ENCODE measurements at regions of chr10 and their contacts with region 1.

Region 1: GRCh38 chr10:70212879-70213278 is 20.4 kb downstream of the PPA1 start:
- DNase-seq: no peak
- H3K4me3 ChIP-seq: no peak overlapping the region
- H3K27ac ChIP-seq: no peak overlapping the region
- H3K4me1 ChIP-seq: no peaks in the 10 kb centered on the region
- H3K27me3 ChIP-seq: no peaks in the 10 kb centered on the region
- CTCF ChIP-seq: no peak

Region 2: DNA sequence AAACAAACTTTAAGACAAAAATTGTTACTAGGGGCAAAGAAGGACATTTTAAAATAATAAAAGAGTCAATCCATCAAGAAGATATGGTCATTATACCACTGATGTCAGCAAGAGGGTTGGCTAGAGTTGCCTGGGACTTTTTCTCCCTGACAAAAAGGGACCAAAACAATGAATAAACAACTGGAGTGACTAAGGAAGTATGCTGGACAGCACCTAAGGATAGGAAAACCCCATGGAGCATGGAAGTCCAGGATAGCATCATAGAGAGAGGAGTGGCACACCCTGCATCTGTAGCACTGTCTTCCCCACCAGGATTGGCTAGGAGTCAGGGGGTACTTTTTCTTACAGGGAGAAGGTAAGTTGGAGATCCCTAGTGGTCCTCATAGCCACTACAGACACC is 233.7 kb before region 1 on chr10:
- intact Hi-C with region 1: no loop called
- DNase-seq: no peak
- H3K4me3 ChIP-seq: no peak overlapping the region
- H3K27ac ChIP-seq: no peak overlapping the region
- H3K4me1 ChIP-seq: no peaks in the 10 kb centered on the region
- H3K27me3 ChIP-seq: no peaks in the 10 kb centered on the region
- CTCF ChIP-seq: no peak

Region 3: DNA sequence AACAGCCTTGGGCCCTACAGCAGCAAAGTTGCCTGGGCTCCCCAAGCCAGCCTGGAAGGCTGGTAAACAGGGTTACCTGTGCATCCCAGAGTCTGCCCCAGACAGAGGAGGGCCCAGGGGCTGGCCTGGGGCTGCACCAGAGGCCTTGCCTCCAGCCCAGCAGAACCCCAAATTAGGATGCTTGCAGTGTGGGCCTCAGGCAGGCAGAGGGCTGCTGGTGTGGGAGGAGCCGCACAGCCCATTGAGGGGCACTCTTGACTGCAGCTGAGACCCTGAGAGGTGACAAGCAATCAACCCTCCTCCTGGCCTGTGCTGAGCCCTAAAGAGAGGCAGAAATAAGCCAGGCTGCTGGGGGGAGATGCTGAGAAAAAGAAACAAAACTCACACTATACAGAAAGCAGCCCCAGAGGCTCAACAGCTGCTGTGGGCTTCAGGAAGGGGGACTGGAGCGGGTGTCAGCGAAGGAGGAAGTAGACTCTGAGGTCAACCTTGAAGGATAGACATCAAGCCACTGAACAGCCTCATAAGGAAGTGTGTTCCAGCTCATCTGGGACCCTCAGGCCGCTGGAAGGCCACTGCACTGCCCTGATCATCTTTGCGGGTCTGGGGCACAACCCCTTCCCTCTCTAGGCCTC is 86.8 kb before region 1 on chr10:
- intact Hi-C with region 1: no loop called
- DNase-seq: no peak
- H3K4me3 ChIP-seq: no peak overlapping the region
- H3K27ac ChIP-seq: no peak overlapping the region
- H3K4me1 ChIP-seq: no peaks in the 10 kb centered on the region
- H3K27me3 ChIP-seq: no peaks in the 10 kb centered on the region
- CTCF ChIP-seq: no peak

Region 4: GRCh38 chr10:70363971-70364771 is 151.3 kb after region 1 on chr10:
- intact Hi-C with region 1: loop called (anchors 10 kb)
- DNase-seq: peak; percentile 89 to 96 (median 93)
- H3K4me3 ChIP-seq: no peak overlapping the region
- H3K27ac ChIP-seq: peak overlapping the region in 1 of 2 donors; percentile 43
- H3K4me1 ChIP-seq: peaks cover 0 to 11% (median 5%) of the 10 kb centered on the region in 3 donors
- H3K27me3 ChIP-seq: no peaks in the 10 kb centered on the region
- CTCF ChIP-seq: peak; percentile 97

Measured in kidney (tissue), 22 donors.